ENCODE measurements at regions of chr9 and their contacts with region 1.

Region 1: GRCh38 chr9:89497978-89498851 is at the start of gene SEMA4D:
- DNase-seq: peak in 4 of 5 donors; percentile 75 to 84 (median 79)
- ATAC-seq: peak; percentile 44 to 83 (median 80)
- H3K4me3 ChIP-seq: peak within 1 kb of the TSS; percentile 51 to 82 (median 72)
- H3K27ac ChIP-seq: peak within 1 kb of the TSS in 6 of 12 donors; percentile 6 to 84 (median 48)
- H3K4me1 ChIP-seq: peaks cover 0 to 72% (median 9%) of the 10 kb centered on the region in 12 donors
- H3K27me3 ChIP-seq: no peaks in the 10 kb centered on the region
- CTCF ChIP-seq: no peak
- POLR2A ChIP-seq: no peak
- total RNA-seq, gene SEMA4D: 12.8 to 59.8 (median 20.3) TPM

Region 2: GRCh38 chr9:89260525-89260924 is 237.7 kb before region 1 on chr9:
- intact Hi-C with region 1: no loop called
- DNase-seq: no peak
- ATAC-seq: peak in 1 of 4 donors; percentile 39
- H3K4me3 ChIP-seq: no peak overlapping the region
- H3K27ac ChIP-seq: no peak overlapping the region
- H3K4me1 ChIP-seq: no peaks in the 10 kb centered on the region
- H3K27me3 ChIP-seq: no peaks in the 10 kb centered on the region
- CTCF ChIP-seq: no peak
- POLR2A ChIP-seq: no peak

Region 3: DNA sequence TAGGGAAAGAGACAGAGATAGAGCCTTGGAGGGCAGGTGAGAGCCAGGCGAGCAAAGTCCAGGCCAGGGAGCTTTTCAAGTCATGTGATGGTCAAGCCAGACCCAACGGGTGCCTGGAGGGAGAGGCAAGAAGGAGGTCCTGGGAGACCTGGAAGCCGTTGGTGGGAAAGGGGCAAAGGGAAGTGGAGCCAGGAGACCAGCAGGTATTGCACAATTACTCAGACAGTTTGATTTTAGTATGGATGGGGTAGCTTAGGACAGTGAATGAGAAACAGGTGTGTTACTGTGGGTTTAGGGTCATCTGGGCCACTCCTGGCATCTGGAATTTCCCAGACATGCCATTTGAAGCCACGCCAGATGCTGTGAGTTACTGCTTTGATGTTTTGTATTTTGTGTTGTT is 174.8 kb before region 1 on chr9:
- intact Hi-C with region 1: loop called in 1 of 10 experiments (anchors 5 kb)
- DNase-seq: no peak
- ATAC-seq: no peak
- H3K4me3 ChIP-seq: no peak overlapping the region
- H3K27ac ChIP-seq: no peak overlapping the region
- H3K4me1 ChIP-seq: peaks cover 5 to 49% (median 31%) of the 10 kb centered on the region in 12 donors
- H3K27me3 ChIP-seq: no peaks in the 10 kb centered on the region
- CTCF ChIP-seq: no peak
- POLR2A ChIP-seq: no peak

Region 4: GRCh38 chr9:89375191-89375760 is 122.9 kb before region 1 on chr9:
- intact Hi-C with region 1: no loop called
- DNase-seq: no peak
- ATAC-seq: peak in 3 of 4 donors; percentile 9 to 24 (median 14)
- H3K4me3 ChIP-seq: no peak overlapping the region
- H3K27ac ChIP-seq: no peak overlapping the region
- H3K4me1 ChIP-seq: peaks cover 0 to 21% (median 0%) of the 10 kb centered on the region in 12 donors
- H3K27me3 ChIP-seq: no peaks in the 10 kb centered on the region
- CTCF ChIP-seq: no peak
- POLR2A ChIP-seq: no peak

Region 5: DNA sequence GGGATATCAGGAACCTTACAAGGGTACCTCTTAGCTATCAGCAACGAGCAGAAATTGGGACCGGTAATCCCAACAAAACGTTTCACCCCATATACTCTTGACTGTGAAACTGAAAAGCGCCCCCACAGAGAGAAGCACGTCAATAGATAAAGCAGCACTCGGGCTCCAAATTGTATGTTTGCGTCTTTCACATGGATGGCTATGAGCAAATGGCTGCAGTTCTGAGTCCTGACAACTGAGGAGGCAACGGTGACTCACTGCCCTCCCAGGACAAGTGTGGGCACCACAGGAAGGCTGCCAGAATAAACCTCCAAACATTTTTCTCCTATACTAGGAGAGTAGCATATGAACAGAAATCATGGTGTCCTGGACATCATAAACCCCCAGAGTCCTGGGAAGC is 37.0 kb before region 1 on chr9:
- intact Hi-C with region 1: no loop called
- DNase-seq: no peak
- ATAC-seq: peak in 2 of 4 donors; percentile 31 to 70
- H3K4me3 ChIP-seq: no peak overlapping the region
- H3K27ac ChIP-seq: no peak overlapping the region
- H3K4me1 ChIP-seq: peaks cover 0 to 73% (median 0%) of the 10 kb centered on the region in 12 donors
- H3K27me3 ChIP-seq: no peaks in the 10 kb centered on the region
- CTCF ChIP-seq: no peak
- POLR2A ChIP-seq: no peak

Region 6: GRCh38 chr9:90127923-90128322 is 629.7 kb after region 1 on chr9:
- intact Hi-C with region 1: no loop called
- DNase-seq: peak in 2 of 5 donors; percentile 44 to 55
- ATAC-seq: peak; percentile 64 to 93 (median 74)
- H3K4me3 ChIP-seq: no peak overlapping the region
- H3K27ac ChIP-seq: no peak overlapping the region
- H3K4me1 ChIP-seq: peaks cover 0 to 9% (median 0%) of the 10 kb centered on the region in 12 donors
- H3K27me3 ChIP-seq: peaks cover 0 to 10% (median 0%) of the 10 kb centered on the region in 9 donors
- CTCF ChIP-seq: no peak
- POLR2A ChIP-seq: no peak

Measured in heart left ventricle (tissue), 16 donors.